ENCODE measurements at regions of chr15 and their contacts with region 1.

Region 1: GRCh38 chr15:44647036-44647435 is 16.4 kb downstream of the SPG11 start:
- DNase-seq: no peak
- ATAC-seq: no peak
- H3K4me3 ChIP-seq: no peak overlapping the region
- H3K27ac ChIP-seq: no peak overlapping the region
- H3K4me1 ChIP-seq: peaks cover 0 to 7% (median 0%) of the 10 kb centered on the region in 12 donors
- H3K27me3 ChIP-seq: no peaks in the 10 kb centered on the region
- CTCF ChIP-seq: no peak
- POLR2A ChIP-seq: no peak

Region 2: DNA sequence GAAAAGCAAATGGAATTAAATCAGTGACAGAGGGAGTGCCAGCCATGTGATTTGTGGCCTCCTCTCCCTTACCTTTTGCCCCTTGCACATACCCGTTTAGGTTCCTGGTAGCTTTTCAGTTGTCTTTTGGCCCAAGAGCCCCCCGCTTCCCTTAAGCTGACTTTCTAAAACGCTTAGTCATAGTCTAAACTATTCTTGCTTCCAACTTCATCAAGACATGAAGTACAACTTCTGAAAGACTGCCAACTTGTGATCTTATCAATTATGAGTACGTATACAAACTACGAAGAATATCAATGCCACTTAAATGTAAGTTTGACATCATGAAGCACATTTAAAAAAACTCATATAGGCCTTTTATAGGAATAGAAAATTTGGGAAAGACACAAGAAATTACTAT is 48.1 kb before region 1 on chr15:
- intact Hi-C with region 1: loop called in 1 of 10 experiments (anchors 5 kb)
- DNase-seq: no peak
- ATAC-seq: no peak
- H3K4me3 ChIP-seq: no peak overlapping the region
- H3K27ac ChIP-seq: peak overlapping the region in 1 of 12 donors; percentile 7
- H3K4me1 ChIP-seq: no peaks in the 10 kb centered on the region
- H3K27me3 ChIP-seq: no peaks in the 10 kb centered on the region
- CTCF ChIP-seq: no peak
- POLR2A ChIP-seq: no peak

Region 3: DNA sequence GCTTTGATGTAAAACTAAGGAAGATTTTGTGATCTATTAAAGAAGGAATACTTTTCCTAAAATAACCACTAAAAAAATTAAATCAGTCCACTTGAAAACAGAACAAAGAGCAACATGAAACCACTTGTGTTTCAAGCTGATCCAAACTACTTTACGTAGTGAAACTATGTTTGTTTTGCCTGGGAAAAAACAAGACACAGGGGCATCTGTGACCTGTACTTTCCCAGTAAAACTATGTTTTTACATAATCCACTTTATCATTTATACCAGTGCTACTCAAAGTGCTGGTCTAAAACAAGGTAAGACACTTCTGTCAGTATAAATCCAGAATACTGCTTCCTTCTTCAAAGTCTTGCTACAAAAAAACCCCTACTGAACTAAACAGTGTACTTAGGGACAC is 40.3 kb before region 1 on chr15:
- intact Hi-C with region 1: loop called in 1 of 10 experiments (anchors 5 kb)
- DNase-seq: no peak
- ATAC-seq: no peak
- H3K4me3 ChIP-seq: no peak overlapping the region
- H3K27ac ChIP-seq: no peak overlapping the region
- H3K4me1 ChIP-seq: no peaks in the 10 kb centered on the region
- H3K27me3 ChIP-seq: no peaks in the 10 kb centered on the region
- CTCF ChIP-seq: no peak
- POLR2A ChIP-seq: no peak